Mucosa of descending colon (tissue), 3 donors: ENCODE measurements at regions of chr14 and their contacts with region 1.

Region 1: GRCh38 chr14:29548948-29549370 is 378.7 kb downstream of the PRKD1 start:
- DNase-seq: peak in 1 of 3 donors; percentile 21
- ATAC-seq: peak; percentile 57
- H3K4me3 ChIP-seq: no peak overlapping the region
- H3K4me1 ChIP-seq: no peaks in the 10 kb centered on the region
- CTCF ChIP-seq: peak; percentile 25

Region 2: DNA sequence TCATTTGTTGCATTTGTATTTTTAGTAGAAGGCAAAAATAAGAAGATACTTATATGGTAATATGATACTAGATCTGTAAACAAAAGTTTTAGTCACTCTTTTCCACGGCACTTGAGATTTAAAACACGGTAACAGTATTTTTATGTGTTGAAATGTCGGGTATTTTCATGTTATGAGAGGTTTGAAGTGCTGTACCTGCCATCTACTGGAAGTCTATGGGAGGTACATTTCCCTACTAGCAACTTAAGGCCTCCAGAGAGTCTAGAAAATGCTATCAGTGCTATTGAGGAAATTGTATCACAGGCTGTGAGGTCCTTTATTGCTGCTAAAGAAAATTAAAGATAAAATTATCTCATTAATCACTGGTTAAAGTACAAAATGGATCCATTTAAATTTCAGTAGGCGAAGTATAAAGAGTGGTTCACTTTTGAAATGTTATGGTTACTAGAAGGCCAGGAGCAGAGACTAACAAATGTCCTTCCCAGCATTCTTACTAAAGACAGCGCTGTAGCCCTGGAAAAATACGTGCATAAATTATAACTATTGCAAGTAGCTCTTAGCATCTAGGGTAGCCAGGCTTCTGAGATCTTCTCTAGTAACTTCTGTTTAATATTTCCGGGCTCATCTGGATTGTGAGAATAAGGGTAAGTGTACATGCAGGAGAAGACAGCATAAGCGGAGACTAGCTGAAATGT is 456.3 kb after region 1 on chr14:
- intact Hi-C with region 1: loop called (anchors 5 kb)
- DNase-seq: peak in 1 of 3 donors; percentile 20
- ATAC-seq: peak; percentile 54
- H3K4me3 ChIP-seq: no peak overlapping the region
- H3K4me1 ChIP-seq: no peaks in the 10 kb centered on the region
- CTCF ChIP-seq: peak; percentile 18

Region 3: GRCh38 chr14:30129807-30130206 is 580.8 kb after region 1 on chr14:
- intact Hi-C with region 1: no loop called
- DNase-seq: no peak
- ATAC-seq: no peak
- H3K4me3 ChIP-seq: no peak overlapping the region
- H3K4me1 ChIP-seq: no peaks in the 10 kb centered on the region
- CTCF ChIP-seq: no peak